Caco-2 (cell line): ENCODE measurements at regions of chr7 and their contacts with region 1.

Region 1: GRCh38 chr7:113698556-113699220 is 220.1 kb downstream of the PPP1R3A start:
- DNase-seq: peak in 1 of 2 experiments; percentile 27
- H3K4me3 ChIP-seq: no peak overlapping the region
- H3K4me3 Mint-ChIP-seq: no peak overlapping the region
- H3K27ac Mint-ChIP-seq: no peak overlapping the region
- H3K4me1 ChIP-seq: no peaks in the 10 kb centered on the region
- H3K4me1 Mint-ChIP-seq: peaks cover 7% of the 10 kb centered on the region
- H3K27me3 ChIP-seq: no peaks in the 10 kb centered on the region
- H3K27me3 Mint-ChIP-seq: no peaks in the 10 kb centered on the region
- CTCF ChIP-seq: peak; percentile 51 to 83

Region 2: GRCh38 chr7:113159746-113160339 is 538.8 kb before region 1 on chr7:
- CTCF ChIA-PET with region 1: no interaction called
- POLR2A ChIA-PET with region 1: no interaction called
- intact Hi-C with region 1: loop called (anchors 5 kb)
- DNase-seq: peak; percentile 44 to 46
- H3K4me3 ChIP-seq: no peak overlapping the region
- H3K4me3 Mint-ChIP-seq: no peak overlapping the region
- H3K27ac Mint-ChIP-seq: no peak overlapping the region
- H3K4me1 ChIP-seq: no peaks in the 10 kb centered on the region
- H3K4me1 Mint-ChIP-seq: no peaks in the 10 kb centered on the region
- H3K27me3 ChIP-seq: no peaks in the 10 kb centered on the region
- H3K27me3 Mint-ChIP-seq: peaks cover 2% of the 10 kb centered on the region
- CTCF ChIP-seq: peak; percentile 76 to 80

Region 3: DNA sequence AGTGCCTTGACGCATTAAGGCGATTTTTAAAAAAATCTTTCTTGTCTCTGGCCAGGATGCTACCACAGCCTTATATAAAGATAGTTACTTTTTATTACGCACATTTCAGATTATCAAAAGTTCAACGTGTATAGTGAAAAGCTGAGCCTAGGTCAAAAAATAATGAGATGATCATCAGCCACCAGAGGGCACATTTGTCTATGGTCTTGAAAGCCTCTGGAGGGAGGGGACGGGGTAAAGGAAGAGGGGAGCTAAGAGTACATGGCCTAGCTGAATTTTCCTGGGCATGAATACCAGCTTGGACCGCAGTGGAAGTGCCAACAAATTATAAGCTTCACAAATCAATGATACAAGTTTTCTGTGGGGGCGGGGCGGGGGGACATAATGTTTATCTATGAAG is 294.4 kb before region 1 on chr7:
- CTCF ChIA-PET with region 1: no interaction called
- POLR2A ChIA-PET with region 1: no interaction called
- intact Hi-C with region 1: loop called (anchors 1 kb)
- DNase-seq: peak; percentile 31 to 39
- H3K4me3 ChIP-seq: no peak overlapping the region
- H3K4me3 Mint-ChIP-seq: no peak overlapping the region
- H3K27ac Mint-ChIP-seq: no peak overlapping the region
- H3K4me1 ChIP-seq: no peaks in the 10 kb centered on the region
- H3K4me1 Mint-ChIP-seq: no peaks in the 10 kb centered on the region
- H3K27me3 ChIP-seq: no peaks in the 10 kb centered on the region
- H3K27me3 Mint-ChIP-seq: no peaks in the 10 kb centered on the region
- CTCF ChIP-seq: peak in 1 of 2 experiments; percentile 30

Region 4: DNA sequence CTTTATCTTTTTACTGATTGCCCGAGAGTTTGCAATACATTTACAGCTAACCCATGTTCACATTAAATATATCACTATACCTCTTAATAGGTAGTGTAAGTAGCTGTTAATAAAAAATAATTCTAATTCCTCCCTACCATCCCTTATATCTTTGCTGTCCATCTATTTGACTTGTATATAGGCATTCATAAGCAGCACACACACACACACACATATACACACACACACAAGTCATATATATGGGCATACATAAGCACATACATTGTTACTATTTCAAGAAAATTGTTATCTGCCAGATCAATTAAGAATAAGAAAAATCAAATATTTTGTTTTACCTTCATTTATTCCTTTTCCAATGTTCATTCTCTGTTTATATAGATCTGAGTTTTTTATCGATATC is 43.7 kb after region 1 on chr7:
- CTCF ChIA-PET with region 1: no interaction called
- POLR2A ChIA-PET with region 1: no interaction called
- intact Hi-C with region 1: no loop called
- DNase-seq: no peak
- H3K4me3 ChIP-seq: no peak overlapping the region
- H3K4me3 Mint-ChIP-seq: no peak overlapping the region
- H3K27ac Mint-ChIP-seq: no peak overlapping the region
- H3K4me1 ChIP-seq: no peaks in the 10 kb centered on the region
- H3K4me1 Mint-ChIP-seq: no peaks in the 10 kb centered on the region
- H3K27me3 ChIP-seq: no peaks in the 10 kb centered on the region
- H3K27me3 Mint-ChIP-seq: no peaks in the 10 kb centered on the region
- CTCF ChIP-seq: no peak